Mammary epithelial cell (primary cell): ENCODE measurements at regions of chr7 and their contacts with region 1.

Region 1: DNA sequence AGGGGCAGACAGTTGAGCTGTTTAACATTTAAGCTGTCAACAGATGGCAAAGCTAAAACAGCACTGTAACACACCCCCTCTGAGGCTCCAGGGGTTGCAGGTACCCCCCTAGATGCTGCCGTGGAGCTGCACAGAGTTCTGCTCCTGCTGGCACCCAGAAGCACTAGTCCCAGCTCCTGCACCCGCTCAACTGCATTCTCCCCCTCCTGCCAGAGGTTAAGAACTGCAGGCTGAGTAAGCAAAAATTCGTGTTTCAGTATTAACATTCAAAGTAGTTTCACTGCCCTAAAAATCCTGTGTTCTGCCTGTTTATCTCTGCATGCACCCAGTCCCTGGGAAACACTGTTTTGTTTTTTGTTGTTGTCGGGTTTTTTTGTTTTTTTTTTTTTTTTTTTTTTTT is 790.8 kb upstream of the KCND2 start:
- DNase-seq: peak; percentile 11
- H3K4me3 ChIP-seq: no peak overlapping the region
- H3K27ac ChIP-seq: no peak overlapping the region
- H3K4me1 ChIP-seq: no peaks in the 10 kb centered on the region
- H3K27me3 ChIP-seq: no peaks in the 10 kb centered on the region
- CTCF ChIP-seq: peak; percentile 26 to 61

Region 2: DNA sequence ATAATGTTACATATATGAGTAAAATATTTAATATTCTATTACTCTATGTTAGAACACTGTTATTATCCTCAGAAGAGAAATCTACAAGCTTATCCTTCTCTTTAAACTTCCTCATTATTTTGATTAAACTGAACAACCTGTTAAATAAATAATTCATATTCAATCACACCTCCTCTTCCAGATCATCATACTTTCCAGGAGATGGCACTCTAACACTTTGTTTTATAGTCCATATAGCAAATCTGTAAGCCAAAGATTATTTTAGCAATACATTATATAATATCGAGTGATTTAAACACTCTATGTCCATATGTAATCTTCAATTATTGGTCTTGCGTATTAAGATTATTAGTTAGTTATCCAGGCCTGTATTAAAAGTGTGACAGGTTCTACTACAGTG is 563.7 kb before region 1 on chr7:
- CTCF ChIA-PET with region 1: no interaction called
- dilution Hi-C with region 1: no loop called
- in situ Hi-C with region 1: no loop called
- intact Hi-C with region 1: loop called (anchors 5 kb)
- DNase-seq: peak; percentile 4
- H3K4me3 ChIP-seq: no peak overlapping the region
- H3K27ac ChIP-seq: no peak overlapping the region
- H3K4me1 ChIP-seq: no peaks in the 10 kb centered on the region
- H3K27me3 ChIP-seq: peaks cover 5% of the 10 kb centered on the region
- CTCF ChIP-seq: peak; percentile 48 to 52